ENCODE measurements at regions of chr1 and their contacts with region 1.

Region 1: DNA sequence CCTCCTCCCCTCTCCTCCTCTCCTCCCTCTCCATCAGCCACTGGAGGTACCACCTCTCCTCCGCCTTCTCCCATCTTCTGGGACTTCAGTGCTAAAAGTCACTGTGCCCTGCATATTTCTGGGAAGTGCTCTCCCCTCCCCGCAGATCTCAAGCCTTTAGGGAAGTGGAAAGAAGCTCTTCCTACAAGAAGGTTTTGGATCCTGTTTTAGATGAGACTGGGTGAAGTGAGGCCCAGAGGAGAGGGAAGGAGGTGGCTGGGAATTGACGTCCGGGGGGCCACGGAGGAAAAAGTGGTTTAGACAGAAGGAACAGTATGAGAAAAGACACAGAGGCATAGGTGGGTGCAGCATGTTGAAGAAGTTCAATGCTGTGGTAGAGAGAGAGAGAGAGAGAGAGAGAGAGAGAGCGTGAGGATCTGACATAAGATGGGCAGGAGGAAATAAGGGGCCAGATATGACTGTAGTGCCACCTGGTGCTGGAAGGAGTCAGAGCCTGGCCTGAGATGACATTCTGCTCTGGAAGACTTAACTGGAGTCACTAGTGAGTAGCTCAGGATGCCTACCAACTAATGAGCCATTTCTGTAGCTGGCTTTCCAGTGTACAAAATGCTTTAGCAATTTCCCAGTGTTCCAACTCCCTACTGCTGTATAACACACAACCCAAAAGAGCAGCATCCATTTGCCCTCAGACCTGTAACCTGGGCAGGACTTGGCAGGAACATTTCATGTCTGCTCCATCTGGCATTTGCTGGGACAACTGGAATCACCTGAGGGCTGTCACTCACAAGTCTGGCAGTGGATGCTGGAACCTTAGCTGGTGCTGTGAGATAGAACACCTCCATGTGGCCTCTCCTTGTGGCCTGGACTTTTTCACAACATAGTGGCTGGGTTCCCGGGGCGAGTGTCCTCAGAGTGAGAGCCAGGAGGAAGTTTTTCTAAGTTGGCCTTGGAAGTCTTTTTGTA is 16.6 kb upstream of the ZSCAN20 start:
- DNase-seq: peak in 6 of 9 donors; percentile 19 to 44 (median 26)
- ATAC-seq: peak; percentile 89
- H3K4me3 ChIP-seq: no peak overlapping the region
- H3K4me3 Mint-ChIP-seq: no peak overlapping the region
- H3K27ac ChIP-seq: no peak overlapping the region
- H3K27ac Mint-ChIP-seq: peak overlapping the region in 3 of 9 donors; percentile 8 to 39 (median 33)
- H3K4me1 ChIP-seq: no peaks in the 10 kb centered on the region
- H3K4me1 Mint-ChIP-seq: peaks cover 0 to 5% (median 0%) of the 10 kb centered on the region in 7 donors
- H3K27me3 ChIP-seq: no peaks in the 10 kb centered on the region
- H3K27me3 Mint-ChIP-seq: peaks cover 0 to 25% (median 9%) of the 10 kb centered on the region in 5 donors

Region 2: DNA sequence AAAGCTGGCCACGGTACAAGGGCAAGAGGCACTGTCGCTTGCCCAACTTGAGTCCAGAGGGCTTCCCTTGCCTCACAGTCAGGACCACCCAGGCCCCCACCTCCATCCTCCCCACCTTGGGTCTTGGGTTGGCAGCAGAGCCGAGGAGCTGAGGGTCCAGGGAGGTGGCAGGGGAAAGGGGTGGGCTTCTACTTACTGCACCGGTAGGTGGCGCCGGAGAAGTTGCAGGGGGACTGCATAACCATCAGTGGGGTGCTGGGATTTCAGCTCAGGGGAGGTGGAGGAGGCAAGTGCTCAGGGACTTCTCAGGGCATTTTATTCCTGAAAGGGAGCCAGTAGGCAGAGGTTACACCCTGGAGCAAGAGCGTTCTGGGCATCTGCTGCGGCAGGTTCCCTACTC is 318.0 kb before region 1 on chr1:
- CTCF ChIA-PET with region 1: no interaction called
- POLR2A ChIA-PET with region 1: no interaction called
- intact Hi-C with region 1: loop called in 1 of 2 experiments (anchors 10 kb)
- DNase-seq: peak in 5 of 9 donors; percentile 9 to 31 (median 22)
- ATAC-seq: peak; percentile 50
- H3K4me3 ChIP-seq: no peak overlapping the region
- H3K4me3 Mint-ChIP-seq: no peak overlapping the region
- H3K27ac ChIP-seq: no peak overlapping the region
- H3K27ac Mint-ChIP-seq: no peak overlapping the region
- H3K4me1 ChIP-seq: no peaks in the 10 kb centered on the region
- H3K4me1 Mint-ChIP-seq: peaks cover 8 to 23% (median 15%) of the 10 kb centered on the region in 7 donors
- H3K27me3 ChIP-seq: no peaks in the 10 kb centered on the region
- H3K27me3 Mint-ChIP-seq: no peaks in the 10 kb centered on the region

Region 3: DNA sequence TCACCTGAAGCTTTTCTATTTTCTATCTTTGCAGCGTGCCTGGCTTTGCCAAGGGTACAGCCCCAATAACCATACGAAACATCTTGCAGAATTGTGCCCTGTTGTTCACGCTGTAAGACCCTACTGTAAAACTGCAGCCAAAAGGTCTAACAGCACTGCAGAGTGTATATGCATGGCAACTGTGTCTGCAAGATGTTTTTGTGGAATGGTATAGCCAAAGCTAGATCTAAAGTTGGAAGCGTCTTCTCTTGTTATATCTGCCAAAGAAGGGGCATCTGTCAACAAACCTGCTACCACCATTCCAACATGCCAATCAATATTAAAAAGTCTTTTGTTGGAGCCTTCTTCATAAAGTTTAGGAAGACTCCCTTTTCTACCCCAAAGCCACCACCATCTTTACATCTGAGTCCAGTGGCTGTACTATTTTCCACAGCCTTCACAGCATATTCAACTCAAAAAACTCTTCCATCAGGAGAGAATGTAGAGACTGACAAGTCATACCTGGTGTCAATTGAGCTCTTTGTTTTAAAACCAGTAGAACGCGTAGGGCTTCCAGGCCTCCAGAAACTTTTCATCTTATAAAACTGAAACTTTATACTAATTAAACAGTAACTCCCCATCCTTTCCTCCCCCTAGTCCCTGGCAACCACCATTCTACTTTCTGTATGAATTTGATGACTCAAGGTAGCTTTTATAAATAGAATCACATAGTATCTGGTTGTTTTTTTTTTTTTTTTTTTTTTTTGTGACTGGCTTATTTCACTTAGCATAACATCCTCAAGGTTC is 56.6 kb after region 1 on chr1:
- CTCF ChIA-PET with region 1: no interaction called
- POLR2A ChIA-PET with region 1: no interaction called
- intact Hi-C with region 1: no loop called
- DNase-seq: no peak
- ATAC-seq: no peak
- H3K4me3 ChIP-seq: no peak overlapping the region
- H3K4me3 Mint-ChIP-seq: no peak overlapping the region
- H3K27ac ChIP-seq: no peak overlapping the region
- H3K27ac Mint-ChIP-seq: no peak overlapping the region
- H3K4me1 ChIP-seq: no peaks in the 10 kb centered on the region
- H3K4me1 Mint-ChIP-seq: peaks cover 0 to 3% (median 0%) of the 10 kb centered on the region in 7 donors
- H3K27me3 ChIP-seq: no peaks in the 10 kb centered on the region
- H3K27me3 Mint-ChIP-seq: peaks cover 0 to 33% (median 15%) of the 10 kb centered on the region in 5 donors